Caco-2 (cell line): ENCODE measurements at regions of chr6 and their contacts with region 1.

Region 1: DNA sequence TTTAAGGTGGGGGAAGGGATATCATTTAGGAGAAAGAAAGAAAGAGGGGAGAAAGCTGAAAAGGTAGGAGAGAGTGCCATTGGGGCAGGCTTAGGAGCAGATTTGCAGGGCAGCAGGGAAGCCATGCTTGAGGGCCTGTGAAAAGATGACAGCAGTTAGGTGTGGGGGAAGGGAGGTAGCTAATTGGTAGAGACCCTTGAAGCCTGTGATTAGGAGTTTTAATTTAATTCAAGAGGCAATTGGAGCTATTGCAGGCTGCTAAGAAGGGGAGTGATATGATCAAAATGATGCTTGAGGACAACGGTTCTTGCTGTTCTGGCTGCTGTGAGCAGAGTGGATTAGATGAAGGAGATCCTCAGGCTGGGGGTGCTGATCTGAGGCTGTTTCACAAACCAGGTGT is 24.5 kb upstream of the SEC63 start:
- DNase-seq: no peak
- H3K4me3 ChIP-seq: no peak overlapping the region
- H3K4me3 Mint-ChIP-seq: no peak overlapping the region
- H3K27ac Mint-ChIP-seq: no peak overlapping the region
- H3K4me1 ChIP-seq: 0 out of 2 replicates have a peak, but pooled peaks cover under 1% of the 10 kb centered on the region
- H3K4me1 Mint-ChIP-seq: no peaks in the 10 kb centered on the region
- H3K27me3 ChIP-seq: no peaks in the 10 kb centered on the region
- H3K27me3 Mint-ChIP-seq: no peaks in the 10 kb centered on the region
- CTCF ChIP-seq: no peak

Region 2: GRCh38 chr6:107877968-107878367 is 104.5 kb before region 1 on chr6:
- CTCF ChIA-PET with region 1: no interaction called
- POLR2A ChIA-PET with region 1: no interaction called
- intact Hi-C with region 1: no loop called
- DNase-seq: no peak
- H3K4me3 ChIP-seq: no peak overlapping the region
- H3K4me3 Mint-ChIP-seq: no peak overlapping the region
- H3K27ac Mint-ChIP-seq: no peak overlapping the region
- H3K4me1 ChIP-seq: no peaks in the 10 kb centered on the region
- H3K4me1 Mint-ChIP-seq: no peaks in the 10 kb centered on the region
- H3K27me3 ChIP-seq: no peaks in the 10 kb centered on the region
- H3K27me3 Mint-ChIP-seq: no peaks in the 10 kb centered on the region
- CTCF ChIP-seq: no peak

Region 3: GRCh38 chr6:108030211-108030610 is 47.7 kb after region 1 on chr6:
- CTCF ChIA-PET with region 1: no interaction called
- POLR2A ChIA-PET with region 1: no interaction called
- intact Hi-C with region 1: loop called (anchors 5 kb)
- DNase-seq: peak in 1 of 2 experiments; percentile 6
- H3K4me3 ChIP-seq: no peak overlapping the region
- H3K4me3 Mint-ChIP-seq: no peak overlapping the region
- H3K27ac Mint-ChIP-seq: peak overlapping the region; percentile 19
- H3K4me1 ChIP-seq: peaks cover 22% of the 10 kb centered on the region
- H3K4me1 Mint-ChIP-seq: peaks cover 27% of the 10 kb centered on the region
- H3K27me3 ChIP-seq: no peaks in the 10 kb centered on the region
- H3K27me3 Mint-ChIP-seq: no peaks in the 10 kb centered on the region
- CTCF ChIP-seq: no peak

Region 4: GRCh38 chr6:108052706-108053105 is 70.2 kb after region 1 on chr6:
- CTCF ChIA-PET with region 1: interaction called, 21 read pairs
- POLR2A ChIA-PET with region 1: no interaction called
- intact Hi-C with region 1: loop called (anchors 1 kb)
- DNase-seq: no peak
- H3K4me3 ChIP-seq: no peak overlapping the region
- H3K4me3 Mint-ChIP-seq: no peak overlapping the region
- H3K27ac Mint-ChIP-seq: no peak overlapping the region
- H3K4me1 ChIP-seq: no peaks in the 10 kb centered on the region
- H3K4me1 Mint-ChIP-seq: no peaks in the 10 kb centered on the region
- H3K27me3 ChIP-seq: no peaks in the 10 kb centered on the region
- H3K27me3 Mint-ChIP-seq: no peaks in the 10 kb centered on the region
- CTCF ChIP-seq: no peak